ENCODE measurements at regions of chr10 and their contacts with region 1.

Region 1: GRCh38 chr10:7192831-7193361 is 217.9 kb downstream of the SFMBT2 start:
- DNase-seq: peak; percentile 30 to 85 (median 80)
- ATAC-seq: peak; percentile 95
- H3K4me3 ChIP-seq: peak overlapping the region; percentile 29
- H3K4me3 Mint-ChIP-seq: peak overlapping the region; percentile 67 to 89 (median 87)
- H3K27ac ChIP-seq: peak overlapping the region; percentile 66
- H3K27ac Mint-ChIP-seq: peak overlapping the region; percentile 93 to 98 (median 97)
- H3K4me1 ChIP-seq: peaks cover 24 to 80% of the 10 kb centered on the region in 2 donors
- H3K4me1 Mint-ChIP-seq: peaks cover 46 to 88% (median 75%) of the 10 kb centered on the region in 7 donors
- H3K27me3 ChIP-seq: no peaks in the 10 kb centered on the region
- H3K27me3 Mint-ChIP-seq: no peaks in the 10 kb centered on the region

Region 2: GRCh38 chr10:6929148-6929830 is 263.6 kb before region 1 on chr10:
- CTCF ChIA-PET with region 1: no interaction called
- POLR2A ChIA-PET with region 1: no interaction called
- intact Hi-C with region 1: loop called (anchors 1 to 2 kb)
- DNase-seq: no peak
- ATAC-seq: no peak
- H3K4me3 ChIP-seq: no peak overlapping the region
- H3K4me3 Mint-ChIP-seq: peak overlapping the region in 2 of 10 donors; percentile 1 to 35
- H3K27ac ChIP-seq: no peak overlapping the region
- H3K27ac Mint-ChIP-seq: peak overlapping the region in 2 of 9 donors; percentile 23 to 53
- H3K4me1 ChIP-seq: peaks cover 26 to 46% of the 10 kb centered on the region in 2 donors
- H3K4me1 Mint-ChIP-seq: peaks cover 25 to 46% (median 34%) of the 10 kb centered on the region in 7 donors
- H3K27me3 ChIP-seq: no peaks in the 10 kb centered on the region
- H3K27me3 Mint-ChIP-seq: peaks cover 0 to 10% (median 4%) of the 10 kb centered on the region in 5 donors

Region 3: DNA sequence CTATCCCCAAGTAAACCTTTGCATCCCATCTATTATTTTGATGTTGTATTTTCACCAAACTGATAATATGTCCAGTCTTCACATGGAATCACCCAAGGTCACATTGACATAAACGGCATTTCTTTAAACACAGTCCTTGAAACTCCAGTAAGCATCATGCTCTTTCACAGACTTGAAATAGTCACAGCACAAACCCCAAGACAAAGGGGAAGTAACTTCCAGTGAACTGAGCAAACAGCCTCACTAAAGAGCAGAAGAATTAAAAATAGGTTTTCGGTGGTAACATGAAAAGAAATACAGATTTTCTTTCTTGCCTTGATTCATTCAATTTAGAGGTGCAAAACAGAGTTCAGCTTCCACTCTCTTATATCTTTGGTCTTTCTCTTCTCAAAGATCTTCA is 35.8 kb before region 1 on chr10:
- CTCF ChIA-PET with region 1: interaction called, 3 read pairs
- POLR2A ChIA-PET with region 1: interaction called, 5 read pairs
- intact Hi-C with region 1: loop called in 1 of 2 experiments (anchors 5 kb)
- DNase-seq: no peak
- ATAC-seq: peak; percentile 52
- H3K4me3 ChIP-seq: no peak overlapping the region
- H3K4me3 Mint-ChIP-seq: no peak overlapping the region
- H3K27ac ChIP-seq: no peak overlapping the region
- H3K27ac Mint-ChIP-seq: peak overlapping the region in 4 of 9 donors; percentile 16 to 59 (median 42)
- H3K4me1 ChIP-seq: peaks cover 12 to 17% of the 10 kb centered on the region in 2 donors
- H3K4me1 Mint-ChIP-seq: peaks cover 15 to 51% (median 40%) of the 10 kb centered on the region in 7 donors
- H3K27me3 ChIP-seq: no peaks in the 10 kb centered on the region
- H3K27me3 Mint-ChIP-seq: peaks cover 0 to 7% (median 0%) of the 10 kb centered on the region in 5 donors

Region 4: DNA sequence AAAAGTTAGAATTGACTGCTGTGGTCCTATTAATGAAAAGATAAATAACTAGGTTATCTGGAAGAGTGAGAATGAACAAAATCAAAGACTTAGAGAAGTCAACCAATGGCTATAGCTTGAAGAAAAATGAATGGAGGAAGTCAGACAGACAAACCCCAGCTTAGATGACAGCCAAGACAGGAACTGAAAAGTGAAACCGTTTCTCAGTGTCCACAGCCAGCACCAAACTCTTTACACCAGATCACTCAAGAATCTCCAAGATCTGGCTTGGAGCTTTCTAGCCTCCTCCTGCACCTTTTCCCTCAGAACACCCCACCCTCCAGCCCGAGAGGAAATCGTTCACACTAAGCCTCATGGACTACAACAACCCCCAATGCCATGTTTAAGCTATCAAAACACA is 51.0 kb after region 1 on chr10:
- CTCF ChIA-PET with region 1: no interaction called
- POLR2A ChIA-PET with region 1: no interaction called
- intact Hi-C with region 1: loop called in 1 of 2 experiments (anchors 2 kb)
- DNase-seq: peak in 1 of 9 donors; percentile 22
- ATAC-seq: peak; percentile 79
- H3K4me3 ChIP-seq: no peak overlapping the region
- H3K4me3 Mint-ChIP-seq: peak overlapping the region in 9 of 10 donors; percentile 9 to 80 (median 48)
- H3K27ac ChIP-seq: no peak overlapping the region
- H3K27ac Mint-ChIP-seq: peak overlapping the region; percentile 56 to 91 (median 77)
- H3K4me1 ChIP-seq: peaks cover 9 to 16% of the 10 kb centered on the region in 2 donors
- H3K4me1 Mint-ChIP-seq: peaks cover 30 to 65% (median 51%) of the 10 kb centered on the region in 7 donors
- H3K27me3 ChIP-seq: no peaks in the 10 kb centered on the region
- H3K27me3 Mint-ChIP-seq: no peaks in the 10 kb centered on the region

Region 5: GRCh38 chr10:7265396-7266123 is 72.7 kb after region 1 on chr10:
- CTCF ChIA-PET with region 1: no interaction called
- POLR2A ChIA-PET with region 1: no interaction called
- intact Hi-C with region 1: loop called (anchors 1 kb)
- DNase-seq: no peak
- ATAC-seq: no peak
- H3K4me3 ChIP-seq: no peak overlapping the region
- H3K4me3 Mint-ChIP-seq: no peak overlapping the region
- H3K27ac ChIP-seq: no peak overlapping the region
- H3K27ac Mint-ChIP-seq: peak overlapping the region in 5 of 9 donors; percentile 36 to 84 (median 76)
- H3K4me1 ChIP-seq: peaks cover 6 to 13% of the 10 kb centered on the region in 2 donors
- H3K4me1 Mint-ChIP-seq: peaks cover 16 to 52% (median 38%) of the 10 kb centered on the region in 7 donors
- H3K27me3 ChIP-seq: no peaks in the 10 kb centered on the region
- H3K27me3 Mint-ChIP-seq: no peaks in the 10 kb centered on the region